Gastrocnemius medialis (tissue), 4 donors: ENCODE measurements at regions of chr3 and their contacts with region 1.

Region 1: DNA sequence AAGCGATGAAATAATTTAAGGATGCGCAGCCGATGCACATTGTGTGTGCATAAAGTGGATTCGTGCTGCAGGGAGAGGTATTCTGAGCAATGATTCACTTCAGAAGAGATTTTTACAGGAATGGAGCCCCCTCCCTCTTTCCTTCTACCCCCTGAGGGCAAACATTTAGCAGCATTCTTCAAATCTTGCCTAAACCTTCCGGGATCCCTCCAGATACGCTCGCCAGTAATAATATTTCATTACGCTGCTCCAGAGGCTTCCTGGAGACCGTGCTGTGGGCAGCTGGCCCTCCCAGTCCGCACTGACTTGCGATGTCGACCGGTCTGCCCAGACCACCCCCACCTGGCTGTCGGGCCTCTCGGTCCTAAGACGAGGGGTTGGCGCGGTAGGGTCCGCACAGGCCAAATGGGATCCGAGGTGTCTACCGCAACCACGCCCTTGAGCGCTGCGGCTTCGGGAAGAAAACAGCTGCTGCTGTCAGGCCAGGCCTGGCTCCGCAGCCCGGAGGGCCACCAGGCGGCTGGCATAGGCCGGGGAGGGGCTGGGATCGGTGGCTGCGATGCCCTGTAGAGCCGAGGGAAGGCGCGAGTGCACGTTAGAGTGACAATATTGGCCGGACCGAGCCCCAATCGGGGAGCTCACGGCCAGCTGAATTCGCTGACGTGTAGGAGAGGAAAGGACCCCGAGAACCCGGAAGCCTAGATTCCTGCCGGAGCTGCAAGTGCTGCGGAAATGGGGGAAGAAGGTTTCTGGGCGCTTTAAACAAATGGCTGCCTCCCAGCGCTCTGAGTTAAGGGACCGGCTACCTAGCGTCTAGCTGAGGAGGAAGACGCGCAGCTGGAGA is 14.3 kb downstream of the ZIC4 start:
- DNase-seq: peak; percentile 52 to 79
- ATAC-seq: peak; percentile 76
- H3K4me3 ChIP-seq: peak overlapping the region; percentile 63 to 73 (median 67)
- H3K27ac ChIP-seq: peak overlapping the region; percentile 82 to 94 (median 90)
- H3K4me1 ChIP-seq: peaks cover 0 to 18% of the 10 kb centered on the region in 2 donors
- H3K27me3 ChIP-seq: peaks cover 29 to 35% (median 34%) of the 10 kb centered on the region in 3 donors
- CTCF ChIP-seq: peak; percentile 40 to 68 (median 52)
- POLR2A ChIP-seq: peak; percentile 30 to 52

Region 2: GRCh38 chr3:147409143-147410115 is 17.4 kb after region 1 on chr3 and contains the start of gene ZIC1:
- in situ Hi-C with region 1: no loop called
- intact Hi-C with region 1: loop called (anchors 1 kb)
- DNase-seq: peak in 1 of 2 donors; percentile 72
- ATAC-seq: peak; percentile 63
- H3K4me3 ChIP-seq: peak within 1 kb of the TSS; percentile 66 to 83 (median 70)
- H3K27ac ChIP-seq: peak within 1 kb of the TSS; percentile 79 to 85 (median 82)
- H3K4me1 ChIP-seq: peaks cover 8 to 22% of the 10 kb centered on the region in 2 donors
- H3K27me3 ChIP-seq: peaks cover 28 to 45% (median 35%) of the 10 kb centered on the region in 3 donors
- CTCF ChIP-seq: no peak
- POLR2A ChIP-seq: peak; percentile 66 to 73
- total RNA-seq, gene ZIC1: 3.3 to 5.2 (median 4.3) TPM

Region 3: DNA sequence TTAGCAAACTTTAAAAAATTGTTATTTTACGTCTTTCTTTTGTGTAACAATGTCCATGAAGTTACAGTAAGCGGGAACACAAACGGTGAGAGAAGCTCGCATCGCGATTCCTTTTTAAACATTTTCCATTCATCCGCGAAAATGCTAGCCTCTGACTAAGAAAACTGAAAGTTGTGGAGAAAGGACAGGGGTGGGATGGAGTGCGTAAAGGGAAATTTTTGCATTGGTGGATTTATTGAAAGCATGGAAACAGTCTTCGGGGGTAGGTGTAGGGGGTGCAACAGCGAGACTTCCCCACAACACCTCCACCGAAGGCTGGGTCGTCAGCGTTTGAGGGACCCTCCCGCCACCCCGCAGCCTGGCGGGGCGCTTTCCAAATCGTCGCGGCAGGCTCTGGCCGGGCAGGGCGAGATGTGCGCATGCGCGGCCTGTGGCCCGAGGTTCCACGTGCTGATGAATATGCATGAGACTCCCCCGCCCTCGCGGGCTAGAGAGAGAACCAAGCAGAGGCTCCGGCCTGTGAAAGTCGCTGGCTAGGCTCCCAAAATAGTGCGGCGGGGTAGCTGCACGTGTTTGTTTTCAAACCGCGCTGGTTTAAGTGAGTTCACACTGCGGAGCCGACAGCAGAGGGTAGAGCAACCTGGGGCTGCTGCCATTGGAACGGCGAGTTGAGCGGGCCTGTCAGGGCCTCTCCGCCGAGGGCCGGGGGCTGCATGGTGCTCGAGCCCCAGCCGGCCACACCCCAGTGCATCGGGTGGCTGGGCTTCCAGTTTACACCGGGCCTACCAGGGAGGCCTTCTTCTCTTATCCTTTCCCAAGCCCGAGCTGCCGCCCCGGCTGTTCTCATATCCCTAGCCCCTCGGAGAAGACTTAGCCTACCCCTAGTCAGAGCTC is 27.1 kb after region 1 on chr3:
- in situ Hi-C with region 1: no loop called
- intact Hi-C with region 1: loop called (anchors 2 kb)
- DNase-seq: peak; percentile 72 to 93
- ATAC-seq: peak; percentile 75 to 83
- H3K4me3 ChIP-seq: peak overlapping the region; percentile 50 to 66 (median 57)
- H3K27ac ChIP-seq: peak overlapping the region; percentile 77 to 80 (median 79)
- H3K4me1 ChIP-seq: peaks cover 11 to 13% of the 10 kb centered on the region in 2 donors
- H3K27me3 ChIP-seq: peaks cover 3 to 32% (median 6%) of the 10 kb centered on the region in 3 donors
- CTCF ChIP-seq: no peak
- POLR2A ChIP-seq: peak; percentile 52 to 69

Region 4: GRCh38 chr3:147616998-147617619 is 225.1 kb after region 1 on chr3:
- in situ Hi-C with region 1: loop called in 2 of 4 experiments (anchors 25 kb)
- intact Hi-C with region 1: loop called (anchors 2 kb)
- DNase-seq: no peak
- ATAC-seq: no peak
- H3K4me3 ChIP-seq: no peak overlapping the region
- H3K27ac ChIP-seq: no peak overlapping the region
- H3K4me1 ChIP-seq: peaks cover 0 to 7% of the 10 kb centered on the region in 2 donors
- H3K27me3 ChIP-seq: no peaks in the 10 kb centered on the region
- CTCF ChIP-seq: peak in 4 of 5 experiments; percentile 27 to 62 (median 44)
- POLR2A ChIP-seq: no peak